CD8-positive, alpha-beta T cell (primary cell): ENCODE measurements at regions of chr3 and their contacts with region 1.

Region 1: DNA sequence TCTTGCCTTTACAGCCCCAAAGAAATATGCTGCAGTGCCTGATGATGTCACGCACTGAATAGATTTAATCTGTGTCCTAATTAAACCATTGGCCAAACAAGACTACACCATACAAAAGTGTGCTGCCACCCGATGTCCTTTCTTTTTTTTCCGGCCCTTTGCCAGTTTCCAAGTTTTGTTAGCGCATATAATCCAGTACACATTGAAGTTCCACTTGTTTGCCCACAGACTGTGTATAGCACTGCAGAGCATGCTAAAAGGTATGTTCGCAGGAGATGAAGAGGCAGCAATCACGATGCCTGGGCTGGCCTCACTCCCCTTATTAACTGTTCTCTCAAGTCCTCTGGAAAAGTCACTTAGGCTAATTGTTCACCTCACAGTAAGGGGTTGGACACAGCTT is 26.8 kb downstream of the MRPS25 start:
- DNase-seq: no peak
- ATAC-seq: no peak
- H3K4me3 ChIP-seq: no peak overlapping the region
- H3K4me3 Mint-ChIP-seq: no peak overlapping the region
- H3K27ac ChIP-seq: no peak overlapping the region
- H3K27ac Mint-ChIP-seq: no peak overlapping the region
- H3K4me1 ChIP-seq: no peaks in the 10 kb centered on the region
- H3K4me1 Mint-ChIP-seq: no peaks in the 10 kb centered on the region
- H3K27me3 ChIP-seq: no peaks in the 10 kb centered on the region
- H3K27me3 Mint-ChIP-seq: no peaks in the 10 kb centered on the region
- CTCF ChIP-seq: no peak

Region 2: GRCh38 chr3:14791343-14791945 is 246.9 kb before region 1 on chr3:
- CTCF ChIA-PET with region 1: no interaction called
- POLR2A ChIA-PET with region 1: no interaction called
- intact Hi-C with region 1: no loop called
- DNase-seq: peak; percentile 4 to 66 (median 34)
- ATAC-seq: no peak
- H3K4me3 ChIP-seq: no peak overlapping the region
- H3K4me3 Mint-ChIP-seq: no peak overlapping the region
- H3K27ac ChIP-seq: no peak overlapping the region
- H3K27ac Mint-ChIP-seq: no peak overlapping the region
- H3K4me1 ChIP-seq: no peaks in the 10 kb centered on the region
- H3K4me1 Mint-ChIP-seq: no peaks in the 10 kb centered on the region
- H3K27me3 ChIP-seq: no peaks in the 10 kb centered on the region
- H3K27me3 Mint-ChIP-seq: peaks cover 19% of the 10 kb centered on the region
- CTCF ChIP-seq: peak; percentile 15

Region 3: DNA sequence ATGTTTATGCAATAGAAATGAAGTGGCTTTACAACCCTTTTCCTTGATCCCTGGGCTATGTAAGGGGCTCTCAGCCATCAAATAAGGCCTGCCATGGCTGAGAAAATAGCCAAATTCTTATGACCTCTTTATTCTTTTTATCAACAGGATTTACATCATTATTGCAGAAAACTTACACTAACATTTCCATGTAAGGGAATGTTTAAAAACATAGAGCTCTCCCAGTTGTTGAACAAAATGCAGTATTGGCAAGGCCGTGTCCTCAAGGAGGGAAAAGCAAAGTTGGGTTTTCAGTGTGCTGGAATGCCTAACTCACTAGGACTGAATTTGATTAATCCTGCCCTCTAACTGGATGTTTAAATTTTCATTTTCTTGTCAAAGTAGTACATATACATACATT is 68.6 kb before region 1 on chr3:
- CTCF ChIA-PET with region 1: no interaction called
- POLR2A ChIA-PET with region 1: no interaction called
- intact Hi-C with region 1: no loop called
- DNase-seq: no peak
- ATAC-seq: no peak
- H3K4me3 ChIP-seq: no peak overlapping the region
- H3K4me3 Mint-ChIP-seq: no peak overlapping the region
- H3K27ac ChIP-seq: no peak overlapping the region
- H3K27ac Mint-ChIP-seq: no peak overlapping the region
- H3K4me1 ChIP-seq: no peaks in the 10 kb centered on the region
- H3K4me1 Mint-ChIP-seq: peaks cover 17% of the 10 kb centered on the region
- H3K27me3 ChIP-seq: no peaks in the 10 kb centered on the region
- H3K27me3 Mint-ChIP-seq: no peaks in the 10 kb centered on the region
- CTCF ChIP-seq: no peak

Region 4: GRCh38 chr3:15089201-15089600 is 50.9 kb after region 1 on chr3:
- CTCF ChIA-PET with region 1: no interaction called
- POLR2A ChIA-PET with region 1: no interaction called
- intact Hi-C with region 1: loop called in 1 of 2 experiments (anchors 2 kb)
- DNase-seq: no peak
- ATAC-seq: no peak
- H3K4me3 ChIP-seq: no peak overlapping the region
- H3K4me3 Mint-ChIP-seq: no peak overlapping the region
- H3K27ac ChIP-seq: no peak overlapping the region
- H3K27ac Mint-ChIP-seq: no peak overlapping the region
- H3K4me1 ChIP-seq: no peaks in the 10 kb centered on the region
- H3K4me1 Mint-ChIP-seq: peaks cover 6% of the 10 kb centered on the region
- H3K27me3 ChIP-seq: no peaks in the 10 kb centered on the region
- H3K27me3 Mint-ChIP-seq: no peaks in the 10 kb centered on the region
- CTCF ChIP-seq: no peak